CD8-positive, alpha-beta T cell (primary cell): ENCODE measurements at regions of chr4 and their contacts with region 1.

Region 1: GRCh38 chr4:6308899-6309643 is 39.4 kb downstream of the WFS1 start:
- DNase-seq: peak in 5 of 9 experiments; percentile 26 to 64 (median 52)
- ATAC-seq: peak; percentile 70
- H3K4me3 ChIP-seq: peak overlapping the region in 1 of 2 experiments; percentile 52
- H3K4me3 Mint-ChIP-seq: peak overlapping the region; percentile 78
- H3K27ac ChIP-seq: no peak overlapping the region
- H3K27ac Mint-ChIP-seq: no peak overlapping the region
- H3K4me1 ChIP-seq: peaks cover 9% of the 10 kb centered on the region
- H3K4me1 Mint-ChIP-seq: peaks cover 6% of the 10 kb centered on the region
- H3K27me3 ChIP-seq: no peaks in the 10 kb centered on the region
- H3K27me3 Mint-ChIP-seq: peaks cover 33% of the 10 kb centered on the region
- CTCF ChIP-seq: no peak

Region 2: GRCh38 chr4:6269616-6270511 is 39.2 kb before region 1 on chr4 and contains the start of gene WFS1:
- CTCF ChIA-PET with region 1: no interaction called
- POLR2A ChIA-PET with region 1: no interaction called
- intact Hi-C with region 1: loop called in 1 of 2 experiments (anchors 1 kb)
- DNase-seq: peak; percentile 93 to 99 (median 97)
- ATAC-seq: peak; percentile 98
- H3K4me3 ChIP-seq: peak within 1 kb of the TSS; percentile 56 to 70
- H3K4me3 Mint-ChIP-seq: peak within 1 kb of the TSS; percentile 87
- H3K27ac ChIP-seq: peak within 1 kb of the TSS in 1 of 2 experiments; percentile 11
- H3K27ac Mint-ChIP-seq: peak within 1 kb of the TSS; percentile 41
- H3K4me1 ChIP-seq: peaks cover 13% of the 10 kb centered on the region
- H3K4me1 Mint-ChIP-seq: peaks cover 20% of the 10 kb centered on the region
- H3K27me3 ChIP-seq: no peaks in the 10 kb centered on the region
- H3K27me3 Mint-ChIP-seq: no peaks in the 10 kb centered on the region
- CTCF ChIP-seq: no peak
- total RNA-seq, gene WFS1: 1.2 to 1.8 TPM

Region 3: GRCh38 chr4:6402566-6403398 is 93.7 kb after region 1 on chr4:
- CTCF ChIA-PET with region 1: no interaction called
- POLR2A ChIA-PET with region 1: no interaction called
- intact Hi-C with region 1: no loop called
- DNase-seq: no peak
- ATAC-seq: no peak
- H3K4me3 ChIP-seq: no peak overlapping the region
- H3K4me3 Mint-ChIP-seq: no peak overlapping the region
- H3K27ac ChIP-seq: no peak overlapping the region
- H3K27ac Mint-ChIP-seq: no peak overlapping the region
- H3K4me1 ChIP-seq: no peaks in the 10 kb centered on the region
- H3K4me1 Mint-ChIP-seq: no peaks in the 10 kb centered on the region
- H3K27me3 ChIP-seq: no peaks in the 10 kb centered on the region
- H3K27me3 Mint-ChIP-seq: peaks cover 57% of the 10 kb centered on the region
- CTCF ChIP-seq: no peak

Region 4: GRCh38 chr4:6493658-6494304 is 184.7 kb after region 1 on chr4:
- CTCF ChIA-PET with region 1: no interaction called
- POLR2A ChIA-PET with region 1: no interaction called
- intact Hi-C with region 1: no loop called
- DNase-seq: no peak
- ATAC-seq: no peak
- H3K4me3 ChIP-seq: no peak overlapping the region
- H3K4me3 Mint-ChIP-seq: no peak overlapping the region
- H3K27ac ChIP-seq: no peak overlapping the region
- H3K27ac Mint-ChIP-seq: no peak overlapping the region
- H3K4me1 ChIP-seq: no peaks in the 10 kb centered on the region
- H3K4me1 Mint-ChIP-seq: no peaks in the 10 kb centered on the region
- H3K27me3 ChIP-seq: peaks cover 3 to 10% of the 10 kb centered on the region in 2 experiments
- H3K27me3 Mint-ChIP-seq: peaks cover 47% of the 10 kb centered on the region
- CTCF ChIP-seq: no peak